ENCODE measurements at regions of chr5 and their contacts with region 1.

Region 1: DNA sequence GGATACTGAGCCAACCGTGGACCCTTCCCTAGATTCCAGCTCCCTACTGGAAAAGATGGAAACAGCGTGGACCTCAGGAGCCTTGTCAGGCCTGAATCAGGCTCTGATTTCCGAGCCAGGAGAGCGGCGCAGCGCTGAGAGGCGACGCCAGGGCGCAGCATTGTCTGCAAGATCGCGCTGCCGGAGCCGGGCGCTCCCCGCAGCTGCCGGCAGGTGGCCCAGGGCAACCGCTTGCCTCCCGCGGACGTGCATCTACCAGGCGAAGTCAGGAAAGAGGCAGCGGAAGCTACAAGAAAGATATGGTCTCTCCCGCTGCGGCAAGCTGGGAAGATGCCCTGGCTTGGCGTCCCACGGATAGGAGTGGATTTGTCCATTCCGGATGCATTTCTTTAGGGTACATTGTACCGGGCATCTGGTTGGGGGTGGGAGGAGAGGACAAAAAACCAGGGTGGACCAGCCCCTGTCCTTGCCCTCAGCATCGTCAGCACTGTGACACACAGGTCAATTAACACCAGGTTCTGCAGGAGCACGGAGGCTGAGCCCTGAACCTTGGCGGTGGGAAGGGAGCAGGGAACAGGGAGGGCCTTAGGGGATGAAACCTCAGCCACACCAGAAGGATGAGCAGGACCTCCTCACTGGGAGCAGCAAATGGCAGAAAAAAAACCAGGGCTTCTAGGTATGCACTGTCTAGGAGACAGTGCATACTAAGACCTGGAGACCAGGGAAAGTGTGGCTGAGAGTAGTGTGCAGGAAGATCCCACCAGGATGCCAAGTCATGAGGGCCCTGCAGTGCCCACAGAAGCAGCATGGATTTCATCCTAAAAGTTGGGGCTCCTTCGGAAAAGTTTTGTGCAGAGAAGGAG is 55.9 kb downstream of the SFXN1 start:
- DNase-seq: peak; percentile 90
- ATAC-seq: peak; percentile 94
- H3K4me3 Mint-ChIP-seq: peak overlapping the region; percentile 57
- H3K27ac Mint-ChIP-seq: peak overlapping the region; percentile 67
- H3K4me1 Mint-ChIP-seq: peaks cover 59% of the 10 kb centered on the region
- H3K27me3 Mint-ChIP-seq: no peaks in the 10 kb centered on the region
- CTCF ChIP-seq: peak; percentile 100

Region 2: DNA sequence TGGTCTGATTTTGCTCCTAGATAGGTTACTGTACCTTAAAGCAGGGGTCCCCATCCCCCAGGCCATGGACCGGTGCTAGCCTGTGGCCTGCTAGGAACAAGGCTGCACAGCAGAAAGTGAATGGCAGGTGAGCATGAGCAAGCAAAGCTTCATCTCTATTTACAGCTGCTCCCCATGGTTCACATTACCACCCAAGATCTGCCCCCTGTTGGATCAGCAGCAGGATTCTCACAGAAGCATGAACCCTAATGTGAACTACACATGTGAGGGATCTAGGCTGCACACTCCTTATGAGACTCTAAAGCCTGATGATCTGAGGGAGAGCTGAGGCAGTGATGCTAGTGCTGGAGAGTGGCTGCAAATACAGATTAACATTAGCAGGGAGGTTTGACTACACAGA is 168.4 kb before region 1 on chr5:
- CTCF ChIA-PET with region 1: no interaction called
- POLR2A ChIA-PET with region 1: no interaction called
- intact Hi-C with region 1: no loop called
- DNase-seq: no peak
- ATAC-seq: no peak
- H3K4me3 Mint-ChIP-seq: no peak overlapping the region
- H3K27ac Mint-ChIP-seq: no peak overlapping the region
- H3K4me1 Mint-ChIP-seq: no peaks in the 10 kb centered on the region
- H3K27me3 Mint-ChIP-seq: peaks cover 9% of the 10 kb centered on the region
- CTCF ChIP-seq: no peak

Region 3: GRCh38 chr5:175406300-175406699 is 128.0 kb before region 1 on chr5:
- CTCF ChIA-PET with region 1: no interaction called
- POLR2A ChIA-PET with region 1: no interaction called
- intact Hi-C with region 1: no loop called
- DNase-seq: no peak
- ATAC-seq: no peak
- H3K4me3 Mint-ChIP-seq: no peak overlapping the region
- H3K27ac Mint-ChIP-seq: no peak overlapping the region
- H3K4me1 Mint-ChIP-seq: no peaks in the 10 kb centered on the region
- H3K27me3 Mint-ChIP-seq: peaks cover 4% of the 10 kb centered on the region
- CTCF ChIP-seq: no peak

Region 4: GRCh38 chr5:175452166-175452565 is 82.1 kb before region 1 on chr5:
- CTCF ChIA-PET with region 1: no interaction called
- POLR2A ChIA-PET with region 1: no interaction called
- intact Hi-C with region 1: no loop called
- DNase-seq: no peak
- ATAC-seq: no peak
- H3K4me3 Mint-ChIP-seq: no peak overlapping the region
- H3K27ac Mint-ChIP-seq: no peak overlapping the region
- H3K4me1 Mint-ChIP-seq: peaks cover 2% of the 10 kb centered on the region
- H3K27me3 Mint-ChIP-seq: peaks cover 22% of the 10 kb centered on the region
- CTCF ChIP-seq: no peak

Region 5: GRCh38 chr5:175548626-175549311 is 14.5 kb after region 1 on chr5:
- CTCF ChIA-PET with region 1: interaction called, 39 read pairs
- POLR2A ChIA-PET with region 1: no interaction called
- intact Hi-C with region 1: no loop called
- DNase-seq: no peak
- ATAC-seq: no peak
- H3K4me3 Mint-ChIP-seq: no peak overlapping the region
- H3K27ac Mint-ChIP-seq: no peak overlapping the region
- H3K4me1 Mint-ChIP-seq: peaks cover 4% of the 10 kb centered on the region
- H3K27me3 Mint-ChIP-seq: peaks cover 20% of the 10 kb centered on the region
- CTCF ChIP-seq: no peak

Region 6: GRCh38 chr5:175579742-175580432 is 45.6 kb after region 1 on chr5:
- CTCF ChIA-PET with region 1: interaction called, 14 read pairs
- POLR2A ChIA-PET with region 1: no interaction called
- intact Hi-C with region 1: no loop called
- DNase-seq: no peak
- ATAC-seq: peak; percentile 45
- H3K4me3 Mint-ChIP-seq: no peak overlapping the region
- H3K27ac Mint-ChIP-seq: peak overlapping the region; percentile 32
- H3K4me1 Mint-ChIP-seq: peaks cover 10% of the 10 kb centered on the region
- H3K27me3 Mint-ChIP-seq: peaks cover 5% of the 10 kb centered on the region
- CTCF ChIP-seq: no peak

Region 7: DNA sequence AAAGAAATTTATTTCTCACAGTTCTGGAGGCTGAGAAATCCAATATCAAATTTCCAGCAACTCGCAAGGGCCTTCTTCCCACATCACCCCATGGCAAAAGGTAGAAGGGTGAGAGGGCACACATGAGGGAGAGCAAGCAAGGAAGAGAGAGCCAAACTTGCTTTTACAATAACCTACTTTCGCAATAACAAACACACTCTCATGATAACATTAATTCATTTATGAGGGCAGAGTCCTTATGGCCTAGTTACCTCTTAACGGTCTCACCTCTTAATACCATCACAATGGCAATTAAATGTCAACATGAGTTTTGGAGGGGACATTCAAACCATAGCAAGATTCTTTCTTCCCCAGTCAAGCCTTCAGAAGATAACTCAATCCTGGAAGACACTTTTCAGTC is 112.0 kb after region 1 on chr5:
- CTCF ChIA-PET with region 1: interaction called, 14 read pairs
- POLR2A ChIA-PET with region 1: no interaction called
- intact Hi-C with region 1: no loop called
- DNase-seq: no peak
- ATAC-seq: no peak
- H3K4me3 Mint-ChIP-seq: no peak overlapping the region
- H3K27ac Mint-ChIP-seq: no peak overlapping the region
- H3K4me1 Mint-ChIP-seq: peaks cover 36% of the 10 kb centered on the region
- H3K27me3 Mint-ChIP-seq: no peaks in the 10 kb centered on the region
- CTCF ChIP-seq: no peak

Region 8: DNA sequence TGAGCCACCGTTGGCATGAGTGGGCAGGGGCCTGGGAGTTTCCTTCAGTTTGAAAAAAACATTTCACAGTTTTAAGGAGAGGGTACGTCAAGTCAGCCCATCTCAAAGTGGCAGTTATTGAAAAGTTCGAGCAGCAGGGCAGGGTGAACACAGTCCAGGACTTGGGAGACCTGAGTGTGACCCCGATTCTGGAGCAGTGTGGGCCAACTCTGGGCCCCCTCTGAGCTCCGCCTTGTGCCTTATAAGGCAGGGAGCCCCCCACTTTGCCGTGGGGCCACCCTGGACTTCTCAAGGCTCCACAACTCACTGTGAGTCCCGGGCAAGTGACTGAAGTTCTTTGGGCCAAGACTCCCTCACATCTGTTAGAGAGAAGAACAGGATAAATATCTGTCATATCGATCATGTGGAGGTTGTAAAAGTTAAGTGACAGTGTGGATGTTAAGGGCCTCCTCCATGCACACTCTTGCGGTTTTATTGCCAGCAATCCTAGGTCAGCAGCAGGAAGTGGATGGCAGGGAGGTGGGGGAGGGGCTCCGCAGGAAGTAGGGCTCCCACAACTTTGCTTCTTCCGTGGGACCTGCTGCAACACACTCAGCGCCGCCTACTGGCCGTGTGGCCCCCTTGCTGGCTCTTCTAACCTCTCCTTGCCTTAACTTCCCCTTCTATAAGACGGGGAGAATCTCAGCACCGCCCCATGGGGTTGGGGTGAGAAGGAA is 162.0 kb after region 1 on chr5:
- CTCF ChIA-PET with region 1: interaction called, 119 read pairs
- POLR2A ChIA-PET with region 1: interaction called, 4 read pairs
- intact Hi-C with region 1: loop called (anchors 2 kb)
- DNase-seq: peak; percentile 89
- ATAC-seq: peak; percentile 91
- H3K4me3 Mint-ChIP-seq: no peak overlapping the region
- H3K27ac Mint-ChIP-seq: peak overlapping the region; percentile 78
- H3K4me1 Mint-ChIP-seq: peaks cover 28% of the 10 kb centered on the region
- H3K27me3 Mint-ChIP-seq: no peaks in the 10 kb centered on the region
- CTCF ChIP-seq: peak; percentile 88

Region 9: GRCh38 chr5:175729829-175730277 is 195.6 kb after region 1 on chr5:
- CTCF ChIA-PET with region 1: interaction called, 86 read pairs
- POLR2A ChIA-PET with region 1: interaction called, 3 read pairs
- intact Hi-C with region 1: no loop called
- DNase-seq: peak; percentile 94
- ATAC-seq: peak; percentile 98
- H3K4me3 Mint-ChIP-seq: no peak overlapping the region
- H3K27ac Mint-ChIP-seq: no peak overlapping the region
- H3K4me1 Mint-ChIP-seq: peaks cover 5% of the 10 kb centered on the region
- H3K27me3 Mint-ChIP-seq: peaks cover 10% of the 10 kb centered on the region
- CTCF ChIP-seq: peak; percentile 93

Measured in activated CD8-positive, alpha-beta T cell treated with anti-CD3 and anti-CD28 coated beads for 36 hours (primary cell).